Mammary epithelial cell (primary cell): ENCODE measurements at regions of chr20 and their contacts with region 1.

Region 1: DNA sequence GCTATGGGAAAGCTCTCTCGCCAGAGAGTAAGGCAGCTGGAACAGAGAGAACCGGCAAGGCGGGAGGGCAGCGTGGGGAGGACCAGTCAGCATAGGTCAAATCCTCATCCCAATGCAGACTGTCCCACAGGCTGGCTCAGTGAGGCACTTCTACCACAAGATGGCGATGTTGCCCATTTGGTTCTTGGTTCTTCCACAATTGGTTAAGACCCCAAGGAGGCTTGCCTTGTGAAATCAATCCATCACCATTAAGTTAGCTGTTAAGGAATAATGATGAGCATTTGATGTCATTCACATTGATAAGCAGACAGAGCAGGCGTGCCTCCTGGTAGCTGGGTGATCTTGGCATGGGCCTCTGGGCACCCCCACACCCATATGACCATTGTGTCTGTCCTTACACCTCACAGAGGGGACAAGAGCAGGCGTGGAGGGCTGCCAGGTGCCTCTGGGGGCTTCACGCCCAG is 2.4 kb downstream of the CSTL1 start:
- DNase-seq: peak; percentile 65
- H3K4me3 ChIP-seq: no peak overlapping the region
- H3K27ac ChIP-seq: no peak overlapping the region
- H3K4me1 ChIP-seq: peaks cover 14% of the 10 kb centered on the region
- H3K27me3 ChIP-seq: no peaks in the 10 kb centered on the region
- CTCF ChIP-seq: peak; percentile 92 to 95

Region 2: GRCh38 chr20:23508449-23509229 is 66.8 kb after region 1 on chr20:
- CTCF ChIA-PET with region 1: no interaction called
- dilution Hi-C with region 1: loop called (anchors 5 kb)
- in situ Hi-C with region 1: no loop called
- intact Hi-C with region 1: no loop called
- DNase-seq: no peak
- H3K4me3 ChIP-seq: no peak overlapping the region
- H3K27ac ChIP-seq: no peak overlapping the region
- H3K4me1 ChIP-seq: peaks cover 2% of the 10 kb centered on the region
- H3K27me3 ChIP-seq: no peaks in the 10 kb centered on the region
- CTCF ChIP-seq: no peak

Region 3: DNA sequence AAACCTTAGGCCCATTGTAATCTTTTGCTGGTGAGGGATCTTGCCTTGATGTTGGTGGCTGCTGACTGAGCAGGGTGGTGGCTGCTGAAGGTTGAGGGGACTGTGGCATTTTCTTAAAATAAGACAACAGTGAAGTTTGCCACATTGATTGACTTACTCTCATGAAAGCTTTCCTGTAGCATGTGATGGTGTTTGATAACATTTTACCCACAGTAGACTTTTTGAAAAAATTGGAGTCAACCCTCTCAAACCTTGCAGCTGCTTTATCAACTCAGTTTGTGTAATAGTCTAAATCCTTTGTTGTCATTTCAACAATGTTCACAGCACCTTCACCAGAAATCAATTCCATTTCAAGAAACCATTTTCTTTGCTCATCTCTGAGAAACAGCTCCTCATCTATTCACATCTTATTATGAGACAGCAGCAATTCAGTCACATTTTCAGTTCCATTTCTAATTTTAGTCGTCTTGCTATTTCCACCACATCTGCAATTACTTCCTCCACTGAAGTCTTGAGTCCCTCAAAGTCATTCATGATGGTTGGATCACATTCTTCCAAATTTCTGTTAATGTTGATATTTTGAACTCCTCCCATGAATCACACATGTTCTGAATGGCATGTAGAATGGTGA is 89.2 kb after region 1 on chr20:
- CTCF ChIA-PET with region 1: no interaction called
- dilution Hi-C with region 1: no loop called
- in situ Hi-C with region 1: no loop called
- intact Hi-C with region 1: no loop called
- DNase-seq: no peak
- H3K4me3 ChIP-seq: no peak overlapping the region
- H3K27ac ChIP-seq: no peak overlapping the region
- H3K4me1 ChIP-seq: no peaks in the 10 kb centered on the region
- H3K27me3 ChIP-seq: no peaks in the 10 kb centered on the region
- CTCF ChIP-seq: no peak

Region 4: GRCh38 chr20:23613676-23614075 is 171.8 kb after region 1 on chr20:
- CTCF ChIA-PET with region 1: interaction called, 3 read pairs
- dilution Hi-C with region 1: loop called (anchors 10 kb)
- in situ Hi-C with region 1: loop called (anchors 5 to 10 kb)
- intact Hi-C with region 1: no loop called
- DNase-seq: no peak
- H3K4me3 ChIP-seq: no peak overlapping the region
- H3K27ac ChIP-seq: no peak overlapping the region
- H3K4me1 ChIP-seq: no peaks in the 10 kb centered on the region
- H3K27me3 ChIP-seq: no peaks in the 10 kb centered on the region
- CTCF ChIP-seq: no peak

Region 5: DNA sequence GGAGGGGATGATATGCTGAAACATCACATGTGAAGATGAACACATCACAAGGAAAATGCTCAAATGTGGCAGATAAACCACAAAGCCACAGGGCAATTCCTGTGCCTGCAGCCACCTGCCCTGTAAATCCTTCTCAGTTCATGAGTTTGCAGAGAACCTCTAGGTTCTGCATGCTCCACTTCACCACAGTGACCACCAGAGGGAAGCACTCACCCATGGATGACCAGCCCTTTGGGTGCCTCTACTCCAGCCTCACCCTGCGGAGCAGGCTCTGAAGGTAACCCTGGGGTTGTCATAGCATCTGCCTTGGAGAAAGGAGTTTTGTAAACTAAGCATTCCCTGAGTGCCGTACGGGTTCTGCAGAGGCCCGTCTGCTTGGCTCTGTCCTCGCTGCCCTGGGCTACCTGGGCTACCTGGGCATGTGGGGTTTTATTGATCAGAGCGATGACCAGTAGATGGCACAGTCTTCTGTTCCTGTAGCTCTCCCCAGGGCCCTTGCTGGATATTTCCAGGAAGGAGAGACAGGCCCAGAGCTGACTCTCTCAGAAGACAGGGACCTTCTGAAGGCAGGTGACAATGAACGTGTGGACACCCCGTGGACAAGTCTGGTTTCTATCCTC is 340.6 kb after region 1 on chr20:
- CTCF ChIA-PET with region 1: no interaction called
- dilution Hi-C with region 1: no loop called
- in situ Hi-C with region 1: no loop called
- intact Hi-C with region 1: loop called (anchors 5 kb)
- DNase-seq: peak; percentile 40
- H3K4me3 ChIP-seq: no peak overlapping the region
- H3K27ac ChIP-seq: no peak overlapping the region
- H3K4me1 ChIP-seq: no peaks in the 10 kb centered on the region
- H3K27me3 ChIP-seq: no peaks in the 10 kb centered on the region
- CTCF ChIP-seq: peak; percentile 50 to 67